ENCODE measurements at regions of chr19 and their contacts with region 1.

Region 1: GRCh38 chr19:7104747-7105447 is 35.4 kb downstream of the ZNF557 start:
- DNase-seq: peak in 1 of 10 donors; percentile 24
- H3K4me3 ChIP-seq: no peak overlapping the region
- H3K27ac ChIP-seq: no peak overlapping the region
- H3K27me3 ChIP-seq: no peaks in the 10 kb centered on the region
- CTCF ChIP-seq: no peak

Region 2: DNA sequence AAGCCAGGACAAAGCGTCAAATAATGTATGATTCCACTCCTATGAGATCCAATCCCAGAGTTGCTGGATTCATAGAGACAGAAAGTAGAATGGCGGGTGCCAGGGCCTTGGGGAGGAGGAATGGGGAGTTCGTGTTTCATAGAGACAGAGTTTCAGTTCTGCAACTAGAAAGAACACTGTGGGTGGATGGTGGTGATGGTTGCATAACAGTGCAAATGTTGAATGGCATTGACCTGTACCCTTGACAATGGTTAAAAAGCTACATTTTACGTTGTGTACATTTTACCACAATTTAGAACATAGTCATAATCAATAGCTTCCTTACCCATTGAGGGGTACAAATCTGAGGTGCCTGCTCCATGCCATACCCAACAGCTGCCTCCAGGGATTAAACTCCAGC is 117.0 kb before region 1 on chr19:
- intact Hi-C with region 1: no loop called
- DNase-seq: no peak
- H3K4me3 ChIP-seq: no peak overlapping the region
- H3K27ac ChIP-seq: no peak overlapping the region
- H3K27me3 ChIP-seq: peaks cover 0 to 6% (median 0%) of the 10 kb centered on the region in 45 donors
- CTCF ChIP-seq: no peak

Region 3: GRCh38 chr19:7125221-7125620 is 20.3 kb after region 1 on chr19:
- intact Hi-C with region 1: no loop called
- DNase-seq: no peak
- H3K4me3 ChIP-seq: no peak overlapping the region
- H3K27ac ChIP-seq: peak overlapping the region in 1 of 59 donors; percentile 63
- H3K27me3 ChIP-seq: no peaks in the 10 kb centered on the region
- CTCF ChIP-seq: no peak

Region 4: GRCh38 chr19:7145494-7146485 is 40.9 kb after region 1 on chr19:
- intact Hi-C with region 1: loop called (anchors 5 kb)
- DNase-seq: no peak
- H3K4me3 ChIP-seq: no peak overlapping the region
- H3K27ac ChIP-seq: no peak overlapping the region
- H3K27me3 ChIP-seq: no peaks in the 10 kb centered on the region
- CTCF ChIP-seq: no peak